ENCODE measurements at regions of chr12 and their contacts with region 1.

Region 1: DNA sequence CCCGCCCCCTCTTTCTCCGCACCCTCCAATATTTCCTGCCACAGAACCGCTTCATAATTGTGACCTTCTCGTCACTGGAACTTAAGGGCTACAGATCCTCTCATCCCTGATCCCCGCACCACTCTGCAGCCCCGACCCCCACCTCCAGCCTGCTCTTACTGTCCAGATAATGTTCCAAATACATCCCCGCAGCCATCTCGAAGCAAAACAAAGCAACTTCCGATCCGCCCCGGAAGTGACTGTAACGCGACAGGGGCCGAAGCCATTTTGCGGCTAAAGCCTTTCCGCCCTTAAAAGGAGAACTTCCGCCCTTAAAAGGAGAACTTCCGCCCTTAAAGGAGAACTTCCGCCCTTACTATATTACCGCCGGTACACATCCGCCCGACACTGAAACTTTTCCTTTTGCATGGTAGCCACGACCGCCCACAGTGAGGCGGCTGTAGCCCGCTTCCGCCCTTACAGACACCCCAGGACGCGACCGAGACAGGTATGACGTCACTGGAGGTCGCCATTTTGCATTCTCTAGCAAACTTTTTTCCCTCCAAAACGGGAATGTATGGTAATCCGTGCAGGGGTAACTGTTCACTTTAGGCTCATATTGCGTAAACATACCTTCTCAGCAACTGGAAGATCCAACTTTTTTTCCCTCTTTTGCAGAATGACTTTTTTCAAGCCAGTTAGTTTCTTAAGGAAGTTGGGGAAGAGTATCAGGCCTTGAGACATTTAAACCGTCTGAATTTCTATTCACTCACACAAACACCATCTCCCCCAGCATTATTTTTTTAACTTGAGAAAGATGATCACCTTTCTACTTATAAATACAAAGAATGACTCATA is at the start of gene ING4:
- DNase-seq: peak; percentile 99
- total RNA-seq, gene ING4: 23.0 to 25.9 TPM

Region 2: GRCh38 chr12:6614513-6615172 is 48.5 kb before region 1 on chr12:
- intact Hi-C with region 1: loop called in 1 of 2 experiments (anchors 5 kb)
- DNase-seq: no peak

Region 3: DNA sequence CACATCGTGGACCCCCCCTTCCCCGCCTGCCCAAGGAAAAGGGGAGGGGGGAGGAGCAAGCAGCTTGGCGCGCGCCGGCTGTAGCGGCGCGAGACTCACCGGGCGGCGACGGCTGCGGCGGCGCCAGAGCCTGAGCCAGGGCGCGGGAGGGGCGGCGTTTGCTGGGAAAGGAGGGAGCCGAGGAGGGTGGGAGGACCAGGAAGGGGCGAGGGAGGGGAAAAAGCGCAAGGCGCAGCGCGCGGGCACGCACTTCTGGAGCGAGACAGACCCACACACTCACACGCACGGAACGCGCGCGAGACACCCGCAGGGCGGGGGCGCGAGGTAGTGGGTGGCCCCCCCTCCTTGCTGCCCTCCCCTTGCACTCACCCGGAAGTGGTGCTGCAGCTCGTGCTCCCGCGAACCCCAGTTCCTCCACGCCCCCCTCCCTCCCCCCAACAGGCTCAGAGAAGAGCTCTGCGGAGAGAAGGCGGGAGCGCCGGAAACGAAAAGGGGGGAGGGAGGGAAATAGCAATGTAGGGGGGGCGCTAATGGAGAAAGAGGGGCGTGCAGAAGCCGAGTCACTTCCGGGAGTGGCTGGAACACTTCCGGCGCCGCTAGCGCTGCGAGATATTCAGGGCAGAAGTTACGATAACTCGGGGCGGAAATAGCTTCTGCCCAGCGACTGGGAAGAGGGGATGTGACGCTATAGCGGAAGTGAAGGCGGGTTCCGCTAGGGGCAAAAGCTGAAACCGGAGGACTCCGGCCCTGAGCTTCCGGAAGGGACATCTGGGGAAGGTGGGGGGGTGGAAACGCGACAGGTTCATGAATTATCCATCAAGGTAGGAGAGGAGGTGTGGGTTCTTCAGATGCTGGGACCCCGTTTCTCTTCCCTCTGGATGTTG is 26.1 kb after region 1 on chr12 and contains the start of gene ZNF384:
- intact Hi-C with region 1: loop called in 1 of 2 experiments (anchors 1 kb)
- DNase-seq: peak; percentile 99
- total RNA-seq, gene ZNF384: 35.6 to 40.1 TPM

Region 4: GRCh38 chr12:6766651-6767349 is 103.7 kb after region 1 on chr12:
- intact Hi-C with region 1: no loop called
- DNase-seq: peak; percentile 94